Heart right ventricle (tissue), 16 donors: ENCODE measurements at regions of chr3 and their contacts with region 1.

Region 1: GRCh38 chr3:45760878-45761711 is 35.2 kb downstream of the SLC6A20 start:
- DNase-seq: peak in 1 of 2 donors; percentile 34
- ATAC-seq: peak; percentile 60 to 89 (median 80)
- H3K4me3 ChIP-seq: no peak overlapping the region
- H3K27ac ChIP-seq: no peak overlapping the region
- H3K4me1 ChIP-seq: peaks cover 0 to 3% (median 0%) of the 10 kb centered on the region in 9 donors
- H3K27me3 ChIP-seq: peaks cover 0 to 26% (median 13%) of the 10 kb centered on the region in 7 donors
- CTCF ChIP-seq: peak; percentile 27 to 73 (median 67)

Region 2: GRCh38 chr3:45647148-45647619 is 113.9 kb before region 1 on chr3:
- intact Hi-C with region 1: no loop called
- DNase-seq: no peak
- ATAC-seq: peak; percentile 48 to 81 (median 62)
- H3K4me3 ChIP-seq: no peak overlapping the region
- H3K27ac ChIP-seq: peak overlapping the region in 8 of 10 donors; percentile 3 to 80 (median 41)
- H3K4me1 ChIP-seq: peaks cover 0 to 60% (median 47%) of the 10 kb centered on the region in 9 donors
- H3K27me3 ChIP-seq: no peaks in the 10 kb centered on the region
- CTCF ChIP-seq: no peak

Region 3: DNA sequence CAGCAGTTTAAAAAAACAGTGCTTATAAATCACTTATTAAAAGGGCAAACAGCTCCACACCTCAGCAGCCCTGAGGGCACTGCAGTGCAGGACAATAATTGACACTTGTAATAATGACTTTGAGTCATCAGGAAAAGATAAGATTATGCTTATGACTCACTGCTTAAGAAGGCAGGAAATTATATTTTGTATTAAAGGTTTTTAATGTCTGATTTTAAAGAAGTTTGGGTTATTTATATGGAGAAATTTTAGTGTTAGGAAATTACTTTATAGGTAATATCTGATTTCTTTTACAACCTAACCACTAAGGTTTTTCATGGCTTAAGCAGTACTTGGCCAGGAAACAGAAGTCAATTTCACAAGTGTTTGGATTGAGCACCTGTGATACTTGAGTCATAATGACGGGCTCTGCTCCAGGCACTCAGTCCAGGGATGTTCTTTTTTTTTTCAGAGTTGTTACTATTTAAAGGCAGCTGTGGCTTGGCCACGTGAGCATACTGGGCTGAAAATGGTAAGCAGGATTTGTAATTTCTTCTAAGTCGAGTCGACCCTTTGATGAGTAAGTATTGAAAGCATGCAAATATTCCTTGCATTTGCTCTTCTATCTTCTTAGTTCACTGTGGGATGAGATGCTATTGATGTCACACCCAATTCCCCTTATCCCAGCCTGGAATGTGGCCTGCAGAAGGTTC is 56.9 kb after region 1 on chr3:
- intact Hi-C with region 1: loop called in 1 of 10 experiments (anchors 5 kb)
- DNase-seq: peak in 1 of 2 donors; percentile 15
- ATAC-seq: peak in 7 of 8 donors; percentile 64 to 92 (median 88)
- H3K4me3 ChIP-seq: no peak overlapping the region
- H3K27ac ChIP-seq: peak overlapping the region in 4 of 10 donors; percentile 4 to 39 (median 8)
- H3K4me1 ChIP-seq: peaks cover 0 to 35% (median 19%) of the 10 kb centered on the region in 9 donors
- H3K27me3 ChIP-seq: no peaks in the 10 kb centered on the region
- CTCF ChIP-seq: no peak

Region 4: GRCh38 chr3:45906681-45907407 is 145.7 kb after region 1 on chr3:
- intact Hi-C with region 1: loop called in 2 of 10 experiments (anchors 10 kb)
- DNase-seq: no peak
- ATAC-seq: peak in 6 of 8 donors; percentile 17 to 52 (median 30)
- H3K4me3 ChIP-seq: no peak overlapping the region
- H3K27ac ChIP-seq: no peak overlapping the region
- H3K4me1 ChIP-seq: peaks cover 0 to 13% (median 0%) of the 10 kb centered on the region in 9 donors
- H3K27me3 ChIP-seq: no peaks in the 10 kb centered on the region
- CTCF ChIP-seq: peak in 6 of 9 donors; percentile 13 to 42 (median 27)

Region 5: GRCh38 chr3:45938864-45939263 is 177.8 kb after region 1 on chr3:
- intact Hi-C with region 1: loop called in 1 of 10 experiments (anchors 10 kb)
- DNase-seq: peak; percentile 59 to 82
- ATAC-seq: peak; percentile 72 to 89 (median 84)
- H3K4me3 ChIP-seq: no peak overlapping the region
- H3K27ac ChIP-seq: no peak overlapping the region
- H3K4me1 ChIP-seq: peaks cover 2 to 44% (median 24%) of the 10 kb centered on the region in 9 donors
- H3K27me3 ChIP-seq: no peaks in the 10 kb centered on the region
- CTCF ChIP-seq: peak; percentile 74 to 93 (median 89)

Region 6: DNA sequence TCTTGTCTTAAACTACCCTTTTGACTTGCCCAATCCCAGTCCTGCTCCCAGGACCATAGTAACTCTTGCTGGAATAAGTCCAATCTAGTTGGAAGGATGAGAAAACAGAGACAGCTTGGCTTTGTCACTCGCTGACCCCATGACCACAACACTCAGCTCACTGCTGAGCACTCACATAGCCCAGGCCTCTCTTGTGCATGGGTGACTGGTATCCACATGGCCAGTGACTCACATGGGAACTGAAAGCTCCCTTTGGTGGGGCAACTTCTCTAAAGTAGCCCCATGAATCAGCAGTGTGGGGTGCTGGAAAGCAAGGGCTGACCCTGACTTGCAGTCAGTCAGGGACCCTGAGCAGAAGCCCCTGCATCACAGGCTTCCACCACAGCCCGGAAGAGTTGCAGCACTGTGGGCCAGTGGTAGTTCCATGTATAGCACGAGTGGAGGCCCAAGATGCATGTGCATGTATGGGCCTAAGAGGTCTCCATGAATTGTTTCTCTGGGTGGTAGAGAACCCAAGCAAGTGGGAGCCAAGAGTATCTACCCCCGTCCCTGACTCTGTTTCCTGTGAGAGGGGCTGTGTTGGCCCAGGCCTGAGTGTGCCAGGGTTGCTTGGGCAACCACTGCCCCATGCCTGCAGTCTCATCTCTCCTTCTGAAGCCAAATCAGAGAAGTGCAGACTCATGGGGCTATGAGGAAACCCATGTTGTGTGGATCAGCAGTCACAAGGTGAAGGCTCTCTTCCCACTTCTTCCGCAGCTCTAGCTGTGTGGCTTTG is 328.3 kb after region 1 on chr3:
- intact Hi-C with region 1: loop called in 5 of 10 experiments (anchors 5 to 10 kb)
- DNase-seq: peak; percentile 24 to 51
- ATAC-seq: peak; percentile 79 to 89 (median 86)
- H3K4me3 ChIP-seq: no peak overlapping the region
- H3K27ac ChIP-seq: peak overlapping the region in 4 of 10 donors; percentile 23 to 90 (median 58)
- H3K4me1 ChIP-seq: peaks cover 0 to 76% (median 0%) of the 10 kb centered on the region in 9 donors
- H3K27me3 ChIP-seq: no peaks in the 10 kb centered on the region
- CTCF ChIP-seq: no peak

Region 7: GRCh38 chr3:47420511-47421484 is 1659.7 kb after region 1 on chr3:
- intact Hi-C with region 1: no loop called
- DNase-seq: peak; percentile 83 to 88
- ATAC-seq: peak; percentile 66 to 87 (median 79)
- H3K4me3 ChIP-seq: peak overlapping the region in 2 of 10 donors; percentile 6 to 13
- H3K27ac ChIP-seq: peak overlapping the region in 9 of 10 donors; percentile 45 to 87 (median 76)
- H3K4me1 ChIP-seq: peaks cover 10 to 24% (median 16%) of the 10 kb centered on the region in 9 donors
- H3K27me3 ChIP-seq: no peaks in the 10 kb centered on the region
- CTCF ChIP-seq: peak; percentile 76 to 95 (median 89)